AG04449 (cell line): ENCODE measurements at regions of chr5 and their contacts with region 1.

Region 1: DNA sequence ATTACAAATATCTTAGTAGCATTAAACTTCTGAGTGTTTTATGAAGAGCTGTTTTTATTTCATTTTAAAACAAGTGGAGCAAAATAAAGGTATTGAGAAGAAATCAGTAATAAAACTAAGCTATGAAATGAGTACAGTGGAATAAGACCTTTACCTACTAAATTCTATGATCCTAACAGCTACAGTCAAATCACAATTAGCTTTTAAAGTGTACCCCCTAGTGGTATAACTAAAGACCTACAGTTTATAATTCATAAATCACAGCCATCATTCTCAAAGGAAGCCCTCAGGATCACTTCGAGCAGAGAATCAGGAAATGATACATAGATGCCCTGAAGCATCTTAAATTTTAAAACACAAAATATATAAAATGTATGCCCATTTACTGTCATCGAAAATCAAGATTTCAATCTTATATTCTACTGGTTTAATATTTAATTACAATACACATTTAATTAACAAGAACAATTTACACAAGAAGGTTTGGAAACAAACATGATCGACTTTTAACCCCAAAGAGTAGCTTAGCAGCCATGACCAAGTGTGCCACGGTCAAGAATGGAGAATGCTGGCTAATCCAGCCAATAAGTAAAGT is 12.3 kb downstream of the CCNH start:
- DNase-seq: no peak
- H3K4me3 ChIP-seq: no peak overlapping the region
- CTCF ChIP-seq: peak; percentile 24

Region 2: GRCh38 chr5:87390075-87390887 is 10.1 kb before region 1 on chr5:
- CTCF ChIA-PET with region 1: interaction called, 30 read pairs
- POLR2A ChIA-PET with region 1: no interaction called
- DNase-seq: no peak
- H3K4me3 ChIP-seq: no peak overlapping the region
- CTCF ChIP-seq: no peak

Region 3: DNA sequence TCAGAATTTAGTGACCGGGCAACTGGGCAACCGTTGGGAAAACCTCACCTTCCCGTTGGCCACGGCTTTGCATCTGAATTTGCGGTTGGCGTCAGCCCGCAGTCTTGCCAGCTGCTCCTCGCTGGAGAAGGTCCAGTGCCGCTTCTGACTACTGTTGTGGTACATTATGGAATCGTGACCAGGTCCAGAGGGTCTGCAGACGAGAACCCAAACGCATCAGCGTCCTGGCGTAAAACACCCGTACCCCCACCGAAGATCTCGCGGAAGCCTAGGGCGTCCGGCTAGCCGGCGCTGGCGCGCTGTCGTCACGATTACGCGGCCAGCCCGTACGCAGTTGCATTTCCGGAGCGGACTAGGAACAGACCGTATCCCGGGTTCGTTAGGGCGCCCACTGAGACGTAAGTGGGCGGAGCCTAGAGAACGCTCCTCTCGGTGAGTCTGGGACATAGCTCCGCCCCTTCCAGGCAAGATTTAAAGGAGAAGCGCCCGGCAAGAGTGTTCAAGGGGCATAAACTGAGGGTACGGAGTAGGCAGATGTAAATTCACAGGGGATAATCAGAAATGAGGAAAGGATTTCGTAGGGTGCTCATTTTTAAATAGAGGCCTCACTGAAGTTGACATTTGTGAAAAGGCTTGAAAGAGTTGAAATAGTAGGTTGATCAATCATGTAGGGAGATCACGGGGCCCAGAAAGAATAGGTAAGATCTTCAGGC is 12.4 kb after region 1 on chr5 and contains the start of gene CCNH:
- CTCF ChIA-PET with region 1: interaction called, 26 read pairs
- POLR2A ChIA-PET with region 1: no interaction called
- DNase-seq: peak; percentile 87
- H3K4me3 ChIP-seq: peak within 1 kb of the TSS; percentile 96
- CTCF ChIP-seq: no peak